IMR-90 (cell line): ENCODE measurements at regions of chr4 and their contacts with region 1.

Region 1: DNA sequence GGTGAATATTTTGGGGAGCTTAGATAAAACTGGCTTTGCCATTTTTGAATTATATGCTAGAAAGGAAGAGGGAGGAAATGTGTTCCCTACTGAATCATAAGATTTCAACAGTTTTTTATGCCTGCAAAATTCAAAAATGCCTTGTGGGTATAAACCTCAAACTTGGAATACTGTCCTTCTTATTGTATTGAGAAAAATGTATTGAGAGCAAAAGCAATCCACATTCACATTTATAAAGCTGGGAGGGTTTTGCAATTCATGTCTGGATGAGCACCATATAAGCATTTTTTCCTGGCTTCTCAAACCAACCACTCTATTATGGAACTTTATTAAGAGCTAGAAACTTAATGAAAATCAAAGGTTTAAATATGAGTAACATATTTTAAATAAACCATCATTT is 289.8 kb downstream of the PCDH7 start:
- DNase-seq: no peak
- ATAC-seq: no peak
- H3K4me3 ChIP-seq: no peak overlapping the region
- H3K27ac ChIP-seq: no peak overlapping the region
- H3K4me1 ChIP-seq: no peaks in the 10 kb centered on the region
- H3K27me3 ChIP-seq: no peaks in the 10 kb centered on the region
- CTCF ChIP-seq: no peak
- POLR2A ChIP-seq: no peak
- RAD21 ChIP-seq: no peak

Region 2: GRCh38 chr4:30789219-30789671 is 220.7 kb before region 1 on chr4:
- CTCF ChIA-PET with region 1: no interaction called
- POLR2A ChIA-PET with region 1: no interaction called
- dilution Hi-C with region 1: no loop called
- in situ Hi-C with region 1: no loop called
- intact Hi-C with region 1: no loop called
- DNase-seq: no peak
- ATAC-seq: peak; percentile 32; the same call in 1 of the 2 replicates
- H3K4me3 ChIP-seq: no peak overlapping the region
- H3K27ac ChIP-seq: no peak overlapping the region
- H3K4me1 ChIP-seq: no peaks in the 10 kb centered on the region
- H3K27me3 ChIP-seq: no peaks in the 10 kb centered on the region
- CTCF ChIP-seq: no peak
- POLR2A ChIP-seq: no peak
- RAD21 ChIP-seq: no peak

Region 3: GRCh38 chr4:30948653-30949052 is 61.3 kb before region 1 on chr4:
- CTCF ChIA-PET with region 1: no interaction called
- POLR2A ChIA-PET with region 1: no interaction called
- dilution Hi-C with region 1: no loop called
- in situ Hi-C with region 1: no loop called
- intact Hi-C with region 1: loop called (anchors 5 kb)
- DNase-seq: peak; percentile 58
- ATAC-seq: peak; percentile 76
- H3K4me3 ChIP-seq: no peak overlapping the region
- H3K27ac ChIP-seq: no peak overlapping the region
- H3K4me1 ChIP-seq: peaks cover 3% of the 10 kb centered on the region; the same call in 1 of the 2 replicates
- H3K27me3 ChIP-seq: no peaks in the 10 kb centered on the region; the same call in 1 of the 2 replicates
- CTCF ChIP-seq: no peak
- POLR2A ChIP-seq: no peak
- RAD21 ChIP-seq: no peak